ENCODE measurements at regions of chr20 and their contacts with region 1.

Region 1: DNA sequence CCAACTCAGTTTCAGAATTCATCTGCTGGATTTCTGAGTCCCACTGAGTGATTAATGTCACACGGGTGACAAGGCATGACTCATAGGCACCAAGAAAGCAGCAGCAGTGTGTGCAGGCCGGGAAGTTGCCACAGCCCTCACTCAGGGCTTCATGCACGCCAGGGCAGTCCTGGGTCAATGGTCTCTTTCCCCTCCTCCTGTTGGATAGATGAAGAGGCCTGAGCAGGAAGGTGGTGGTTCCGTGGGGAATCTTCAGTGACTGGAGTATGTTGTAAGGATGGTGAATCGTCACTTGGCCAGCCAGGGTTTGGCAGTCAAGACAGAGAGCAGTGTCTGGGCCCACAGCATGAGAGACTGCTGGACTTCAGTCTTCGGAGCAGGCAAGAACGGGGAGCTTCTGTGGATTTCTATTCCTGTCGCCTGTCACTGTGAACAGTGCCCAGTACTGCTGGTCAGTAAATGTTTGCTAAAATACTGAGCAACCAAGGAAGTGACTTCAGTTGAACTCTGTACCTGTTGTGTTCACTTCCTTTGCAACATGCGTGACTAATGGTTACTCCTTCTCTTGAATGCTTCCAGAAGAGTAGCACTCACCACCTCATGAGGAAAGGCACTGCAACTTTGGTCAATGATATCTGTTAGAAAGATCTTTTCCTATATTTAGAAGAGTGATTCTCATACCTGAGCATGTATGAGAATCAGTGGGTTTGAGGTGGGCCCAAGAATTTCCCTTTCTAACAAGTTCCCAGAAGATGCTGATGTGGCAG is 62.0 kb upstream of the CD93 start:
- DNase-seq: peak; percentile 91 to 96
- ATAC-seq: peak; percentile 59 to 72
- H3K4me3 ChIP-seq: peak overlapping the region in 2 of 4 donors; percentile 15 to 36
- H3K27ac ChIP-seq: peak overlapping the region; percentile 94 to 99 (median 94)
- H3K4me1 ChIP-seq: peaks cover 91 to 97% of the 10 kb centered on the region in 2 donors
- H3K27me3 ChIP-seq: no peaks in the 10 kb centered on the region
- CTCF ChIP-seq: no peak
- POLR2A ChIP-seq: peak; percentile 89 to 91

Region 2: GRCh38 chr20:23136893-23137750 is 11.0 kb before region 1 on chr20:
- in situ Hi-C with region 1: no loop called
- intact Hi-C with region 1: loop called (anchors 2 kb)
- DNase-seq: peak; percentile 91 to 99
- ATAC-seq: peak; percentile 85 to 89
- H3K4me3 ChIP-seq: peak overlapping the region in 1 of 4 donors; percentile 9
- H3K27ac ChIP-seq: peak overlapping the region; percentile 86 to 93 (median 92)
- H3K4me1 ChIP-seq: peaks cover 58 to 77% of the 10 kb centered on the region in 2 donors
- H3K27me3 ChIP-seq: no peaks in the 10 kb centered on the region
- CTCF ChIP-seq: no peak
- POLR2A ChIP-seq: peak; percentile 64 to 77

Region 3: DNA sequence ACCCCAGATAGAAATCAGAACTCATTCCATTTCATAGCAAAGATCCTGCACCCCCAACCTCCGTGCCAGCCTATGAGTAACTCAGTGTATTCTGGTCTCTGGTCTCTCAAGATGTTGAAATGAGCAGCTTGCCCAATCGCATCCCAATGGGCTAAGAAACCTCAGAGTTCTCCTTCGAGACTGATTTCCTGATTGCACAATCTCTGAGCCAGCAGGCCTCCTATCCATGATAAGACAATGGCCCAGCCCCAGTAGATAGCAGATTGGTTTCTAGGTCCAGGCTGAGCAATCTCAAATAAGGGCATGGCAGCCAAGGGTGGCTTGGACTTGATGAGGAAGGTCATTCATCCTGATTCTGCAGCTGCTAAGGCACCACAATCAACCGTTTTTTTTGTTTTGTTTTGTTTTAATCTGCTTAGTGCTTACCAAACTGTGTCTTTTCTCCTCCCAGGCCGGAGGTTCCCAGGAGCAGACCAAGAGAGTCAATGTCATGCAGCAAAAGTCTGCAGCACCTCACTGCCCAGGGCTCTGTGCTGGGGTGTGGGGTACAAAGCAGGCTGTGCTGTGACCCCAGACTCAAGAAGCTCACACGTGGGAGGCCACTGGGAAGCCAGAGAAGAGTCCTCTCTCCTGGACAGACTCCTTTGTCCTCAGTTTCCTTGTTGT is 77.4 kb after region 1 on chr20:
- in situ Hi-C with region 1: no loop called
- intact Hi-C with region 1: no loop called
- DNase-seq: peak; percentile 52 to 72
- ATAC-seq: peak; percentile 82 to 83
- H3K4me3 ChIP-seq: no peak overlapping the region
- H3K27ac ChIP-seq: no peak overlapping the region
- H3K4me1 ChIP-seq: no peaks in the 10 kb centered on the region
- H3K27me3 ChIP-seq: no peaks in the 10 kb centered on the region
- CTCF ChIP-seq: no peak
- POLR2A ChIP-seq: no peak

Region 4: GRCh38 chr20:23357767-23358591 is 209.8 kb after region 1 on chr20:
- in situ Hi-C with region 1: loop called in 2 of 4 experiments (anchors 10 kb)
- intact Hi-C with region 1: loop called (anchors 2 kb)
- DNase-seq: peak; percentile 100
- ATAC-seq: peak; percentile 72 to 78
- H3K4me3 ChIP-seq: peak overlapping the region; percentile 76 to 91 (median 78)
- H3K27ac ChIP-seq: peak overlapping the region; percentile 97 to 99 (median 98)
- H3K4me1 ChIP-seq: peaks cover 29% of the 10 kb centered on the region in 2 donors
- H3K27me3 ChIP-seq: no peaks in the 10 kb centered on the region
- CTCF ChIP-seq: peak in 2 of 5 experiments; percentile 18 to 45
- POLR2A ChIP-seq: peak; percentile 79 to 89

Region 5: DNA sequence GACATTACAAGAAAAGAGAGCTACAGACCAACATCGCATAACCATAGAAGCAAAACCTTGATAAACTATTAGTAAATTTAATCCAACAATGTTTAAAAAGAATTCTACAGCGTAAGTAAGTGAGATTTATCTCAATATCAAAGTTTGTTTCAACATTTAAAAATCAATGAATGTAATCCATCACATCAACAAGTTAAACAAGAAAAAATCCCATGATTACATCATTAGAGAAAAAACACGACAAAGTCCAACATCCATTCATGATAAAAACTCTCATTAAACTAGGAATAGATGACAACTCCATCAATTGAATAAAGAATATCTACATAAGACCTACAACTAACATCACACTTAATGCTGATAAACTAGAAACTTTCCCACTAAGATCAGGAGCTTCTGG is 1079.5 kb after region 1 on chr20:
- in situ Hi-C with region 1: no loop called
- intact Hi-C with region 1: no loop called
- DNase-seq: no peak
- ATAC-seq: no peak
- H3K4me3 ChIP-seq: no peak overlapping the region
- H3K27ac ChIP-seq: no peak overlapping the region
- H3K4me1 ChIP-seq: no peaks in the 10 kb centered on the region
- H3K27me3 ChIP-seq: no peaks in the 10 kb centered on the region
- CTCF ChIP-seq: no peak
- POLR2A ChIP-seq: no peak

Region 6: GRCh38 chr20:25042531-25043498 is 1894.7 kb after region 1 on chr20:
- in situ Hi-C with region 1: no loop called
- intact Hi-C with region 1: loop called (anchors 5 kb)
- DNase-seq: no peak
- ATAC-seq: no peak
- H3K4me3 ChIP-seq: no peak overlapping the region
- H3K27ac ChIP-seq: peak overlapping the region; percentile 92 to 95 (median 95)
- H3K4me1 ChIP-seq: peaks cover 97 to 100% of the 10 kb centered on the region in 2 donors
- H3K27me3 ChIP-seq: no peaks in the 10 kb centered on the region
- CTCF ChIP-seq: no peak
- POLR2A ChIP-seq: no peak

Measured in gastrocnemius medialis (tissue), 4 donors.